Activated CD8-positive, alpha-beta memory T cell treated with anti-CD3 and anti-CD28 coated beads, Interleukin-2, amount 10 ng/mL, durations not matched to agents 7 days and 5 days (primary cell): ENCODE measurements at regions of chr12 and their contacts with region 1.

Region 1: DNA sequence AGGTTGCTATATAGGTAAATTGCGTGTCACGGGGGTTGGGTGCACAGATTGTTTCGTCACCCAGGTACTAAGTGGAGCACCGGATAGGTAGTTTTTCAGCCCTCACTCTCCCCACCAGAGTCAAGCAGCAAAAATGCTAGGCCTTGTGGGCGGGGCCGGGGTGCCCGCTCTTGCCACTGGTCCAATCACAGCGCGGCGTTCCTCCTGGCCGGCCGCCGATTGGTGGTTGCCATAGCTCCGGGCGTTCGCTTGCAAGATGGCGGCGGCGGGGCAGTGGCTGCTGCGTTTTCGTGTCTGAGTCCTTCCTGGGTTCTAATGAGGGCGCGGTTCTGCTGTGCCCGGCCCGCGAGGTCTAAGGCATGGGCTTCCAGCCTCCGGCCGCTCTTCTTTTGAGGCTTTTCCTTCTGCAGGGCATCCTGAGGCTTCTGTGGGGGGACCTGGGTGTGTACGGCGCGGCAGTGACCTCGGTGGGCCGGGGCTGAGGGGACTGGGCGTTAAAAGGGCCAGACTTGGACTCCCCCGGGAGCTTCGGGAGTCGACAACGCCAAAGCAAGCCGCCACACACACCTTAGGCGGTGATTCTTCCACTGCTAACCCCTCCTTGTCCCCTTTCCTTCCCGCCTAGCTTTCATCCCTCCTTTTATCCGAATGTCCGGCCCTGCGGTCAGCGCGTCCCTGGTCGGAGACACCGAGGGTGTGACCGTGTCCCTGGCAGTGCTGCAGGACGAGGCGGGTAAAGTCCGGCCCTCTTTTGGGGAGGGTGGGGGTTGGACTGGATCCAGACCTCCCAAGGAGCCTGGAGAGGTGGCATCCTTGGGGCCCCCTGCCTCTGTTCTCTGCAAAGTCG is at the start of gene TCTN2:
- DNase-seq: peak; percentile 97
- ATAC-seq: peak; percentile 100
- H3K4me3 Mint-ChIP-seq: peak within 1 kb of the TSS; percentile 79
- H3K27ac Mint-ChIP-seq: peak within 1 kb of the TSS; percentile 19
- H3K4me1 Mint-ChIP-seq: peaks cover 10% of the 10 kb centered on the region
- H3K27me3 Mint-ChIP-seq: no peaks in the 10 kb centered on the region
- total RNA-seq, gene TCTN2: 2.6 to 2.9 TPM

Region 2: GRCh38 chr12:123659996-123660727 is 10.9 kb before region 1 on chr12:
- CTCF ChIA-PET with region 1: interaction called, 11 read pairs
- DNase-seq: no peak
- ATAC-seq: no peak
- H3K4me3 Mint-ChIP-seq: peak overlapping the region; percentile 41
- H3K27ac Mint-ChIP-seq: peak overlapping the region; percentile 87
- H3K4me1 Mint-ChIP-seq: peaks cover 22% of the 10 kb centered on the region
- H3K27me3 Mint-ChIP-seq: no peaks in the 10 kb centered on the region